ENCODE measurements at regions of chr10 and their contacts with region 1.

Region 1: DNA sequence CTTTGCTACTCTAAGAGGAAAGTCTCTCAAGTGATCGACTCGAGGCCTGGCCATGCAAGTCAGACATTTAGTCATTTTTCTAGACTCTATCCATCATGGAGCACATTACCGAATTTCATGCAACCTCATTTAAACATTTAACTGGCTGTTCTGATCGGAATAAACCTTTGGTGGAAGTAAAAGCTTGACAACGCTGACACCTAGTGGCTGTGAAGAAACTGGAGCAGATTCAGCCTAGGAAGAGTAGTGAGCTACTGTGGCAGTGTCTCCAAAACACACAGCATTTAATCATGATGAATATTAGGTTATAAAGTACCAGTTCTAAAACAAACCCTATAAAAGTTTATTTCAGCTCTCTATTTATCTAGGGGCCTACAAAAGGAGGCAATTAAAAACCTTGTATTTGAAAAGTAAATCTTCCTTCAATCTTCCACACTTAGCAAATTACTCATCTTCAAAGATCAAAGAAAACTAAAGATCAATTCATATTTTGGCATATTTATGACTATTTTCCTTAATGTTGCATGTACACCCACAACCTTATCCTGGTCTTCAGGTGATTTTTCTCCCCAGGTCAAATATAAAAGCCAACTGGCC is 175.0 kb downstream of the CTNNA3 start:
- DNase-seq: peak; percentile 31
- H3K4me3 Mint-ChIP-seq: no peak overlapping the region
- H3K27ac Mint-ChIP-seq: no peak overlapping the region
- H3K4me1 Mint-ChIP-seq: peaks cover 2% of the 10 kb centered on the region
- H3K27me3 Mint-ChIP-seq: no peaks in the 10 kb centered on the region

Region 2: DNA sequence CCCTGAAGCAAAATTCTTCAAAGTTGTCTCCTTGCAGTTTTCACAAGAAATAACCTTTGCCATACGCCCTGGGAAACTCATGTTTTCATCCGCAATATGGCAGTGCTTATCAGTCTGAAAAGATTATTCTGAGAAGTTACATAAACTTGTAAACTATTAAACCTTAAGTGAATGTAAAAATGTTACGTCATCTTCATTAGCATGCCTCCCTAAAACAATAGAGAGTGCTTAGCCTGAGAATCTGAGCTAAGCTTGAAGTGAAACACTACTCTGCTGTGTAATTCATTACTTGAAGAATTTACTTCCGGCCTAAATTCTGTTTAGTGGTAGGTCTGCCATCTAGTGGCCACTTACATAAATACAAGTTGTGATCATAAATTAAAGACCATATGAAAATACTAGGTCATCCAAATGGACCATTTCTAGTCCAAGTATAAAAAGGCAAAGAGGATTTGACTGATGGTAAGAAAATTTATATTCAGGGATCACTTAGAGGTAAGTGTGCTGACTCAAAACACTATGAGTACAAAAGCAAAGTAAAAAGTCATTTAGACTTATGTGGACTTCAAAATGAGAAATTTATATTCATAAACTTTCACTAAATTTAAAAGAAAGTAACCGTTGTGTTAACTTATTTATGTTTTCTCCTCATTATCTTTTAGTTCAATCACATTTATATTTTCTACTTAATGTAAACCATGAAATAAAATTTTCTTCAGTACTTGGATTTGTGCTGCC is 1340.3 kb before region 1 on chr10:
- CTCF ChIA-PET with region 1: no interaction called
- POLR2A ChIA-PET with region 1: no interaction called
- intact Hi-C with region 1: loop called (anchors 5 kb)
- DNase-seq: no peak
- H3K4me3 Mint-ChIP-seq: no peak overlapping the region
- H3K27ac Mint-ChIP-seq: no peak overlapping the region
- H3K4me1 Mint-ChIP-seq: no peaks in the 10 kb centered on the region
- H3K27me3 Mint-ChIP-seq: no peaks in the 10 kb centered on the region

Region 3: GRCh38 chr10:66931340-66931948 is 589.6 kb before region 1 on chr10:
- CTCF ChIA-PET with region 1: interaction called, 3 read pairs
- POLR2A ChIA-PET with region 1: no interaction called
- intact Hi-C with region 1: loop called (anchors 2 kb)
- DNase-seq: no peak
- H3K4me3 Mint-ChIP-seq: no peak overlapping the region
- H3K27ac Mint-ChIP-seq: no peak overlapping the region
- H3K4me1 Mint-ChIP-seq: no peaks in the 10 kb centered on the region
- H3K27me3 Mint-ChIP-seq: peaks cover 30% of the 10 kb centered on the region

Region 4: DNA sequence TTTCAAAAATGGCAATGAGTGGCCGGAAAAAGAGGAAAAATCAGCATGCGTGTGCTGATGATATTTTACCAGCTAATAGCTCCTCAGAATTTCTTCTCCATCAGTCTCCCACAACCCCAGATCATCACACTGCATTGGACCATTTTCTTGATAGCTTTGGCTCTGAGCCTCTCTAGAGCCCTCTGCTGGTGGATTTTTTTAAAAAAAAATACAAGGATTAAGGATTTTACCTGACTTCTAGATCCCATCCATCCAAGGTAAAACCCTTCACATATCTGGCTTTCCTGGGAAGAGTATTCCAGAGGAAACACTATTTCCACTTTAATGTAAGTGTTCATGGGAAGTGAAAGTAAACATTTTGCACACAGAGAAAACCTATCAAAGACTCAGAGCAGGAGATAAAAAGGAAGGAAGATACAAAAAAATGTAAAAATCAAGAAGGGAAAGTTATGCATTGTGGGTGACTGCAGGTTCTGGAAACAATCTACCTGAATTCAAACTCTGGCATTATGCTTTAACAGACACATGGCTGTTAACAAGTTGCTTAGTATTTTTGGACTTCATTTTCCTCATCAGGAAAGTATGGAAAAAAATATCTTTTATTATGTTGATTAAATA is 214.3 kb before region 1 on chr10:
- CTCF ChIA-PET with region 1: interaction called, 4 read pairs
- POLR2A ChIA-PET with region 1: no interaction called
- intact Hi-C with region 1: loop called (anchors 5 kb)
- DNase-seq: no peak
- H3K4me3 Mint-ChIP-seq: no peak overlapping the region
- H3K27ac Mint-ChIP-seq: no peak overlapping the region
- H3K4me1 Mint-ChIP-seq: no peaks in the 10 kb centered on the region
- H3K27me3 Mint-ChIP-seq: no peaks in the 10 kb centered on the region

Measured in activated CD4-positive, alpha-beta memory T cell treated with anti-CD3 and anti-CD28 coated beads for 36 hours (primary cell).